Caco-2 (cell line): ENCODE measurements at regions of chr3 and their contacts with region 1.

Region 1: GRCh38 chr3:177852001-177852816 is 654.9 kb upstream of the TBL1XR1 start:
- DNase-seq: no peak
- H3K4me3 ChIP-seq: no peak overlapping the region
- H3K4me3 Mint-ChIP-seq: peak overlapping the region; percentile 15
- H3K27ac Mint-ChIP-seq: no peak overlapping the region
- H3K4me1 ChIP-seq: peaks cover 16% of the 10 kb centered on the region
- H3K4me1 Mint-ChIP-seq: no peaks in the 10 kb centered on the region
- H3K27me3 ChIP-seq: no peaks in the 10 kb centered on the region
- H3K27me3 Mint-ChIP-seq: no peaks in the 10 kb centered on the region
- CTCF ChIP-seq: no peak

Region 2: GRCh38 chr3:177824190-177824786 is 27.9 kb before region 1 on chr3:
- CTCF ChIA-PET with region 1: interaction called, 3 read pairs
- POLR2A ChIA-PET with region 1: no interaction called
- intact Hi-C with region 1: loop called (anchors 2 kb)
- DNase-seq: peak; percentile 66 to 80
- H3K4me3 ChIP-seq: no peak overlapping the region
- H3K4me3 Mint-ChIP-seq: no peak overlapping the region
- H3K27ac Mint-ChIP-seq: peak overlapping the region; percentile 77
- H3K4me1 ChIP-seq: peaks cover 38% of the 10 kb centered on the region
- H3K4me1 Mint-ChIP-seq: peaks cover 24% of the 10 kb centered on the region
- H3K27me3 ChIP-seq: no peaks in the 10 kb centered on the region
- H3K27me3 Mint-ChIP-seq: no peaks in the 10 kb centered on the region
- CTCF ChIP-seq: no peak

Region 3: GRCh38 chr3:177835917-177836316 is 16.3 kb before region 1 on chr3:
- CTCF ChIA-PET with region 1: no interaction called
- POLR2A ChIA-PET with region 1: no interaction called
- intact Hi-C with region 1: loop called (anchors 2 kb)
- DNase-seq: no peak
- H3K4me3 ChIP-seq: no peak overlapping the region
- H3K4me3 Mint-ChIP-seq: no peak overlapping the region
- H3K27ac Mint-ChIP-seq: no peak overlapping the region
- H3K4me1 ChIP-seq: no peaks in the 10 kb centered on the region; the same call in 1 of the 2 replicates
- H3K4me1 Mint-ChIP-seq: peaks cover 35% of the 10 kb centered on the region
- H3K27me3 ChIP-seq: no peaks in the 10 kb centered on the region
- H3K27me3 Mint-ChIP-seq: no peaks in the 10 kb centered on the region
- CTCF ChIP-seq: no peak